Activated CD4-positive, alpha-beta T cell treated with anti-CD3 and anti-CD28 coated beads for 36 hours (primary cell): ENCODE measurements at regions of chr10 and their contacts with region 1.

Region 1: GRCh38 chr10:13160934-13161856 is at the start of gene MCM10:
- DNase-seq: peak; percentile 98
- ATAC-seq: peak; percentile 100
- H3K4me3 Mint-ChIP-seq: peak within 1 kb of the TSS; percentile 91
- H3K27ac Mint-ChIP-seq: peak within 1 kb of the TSS; percentile 86
- H3K4me1 Mint-ChIP-seq: peaks cover 26% of the 10 kb centered on the region
- H3K27me3 Mint-ChIP-seq: no peaks in the 10 kb centered on the region
- total RNA-seq, gene MCM10: 86.0 to 86.2 TPM

Region 2: DNA sequence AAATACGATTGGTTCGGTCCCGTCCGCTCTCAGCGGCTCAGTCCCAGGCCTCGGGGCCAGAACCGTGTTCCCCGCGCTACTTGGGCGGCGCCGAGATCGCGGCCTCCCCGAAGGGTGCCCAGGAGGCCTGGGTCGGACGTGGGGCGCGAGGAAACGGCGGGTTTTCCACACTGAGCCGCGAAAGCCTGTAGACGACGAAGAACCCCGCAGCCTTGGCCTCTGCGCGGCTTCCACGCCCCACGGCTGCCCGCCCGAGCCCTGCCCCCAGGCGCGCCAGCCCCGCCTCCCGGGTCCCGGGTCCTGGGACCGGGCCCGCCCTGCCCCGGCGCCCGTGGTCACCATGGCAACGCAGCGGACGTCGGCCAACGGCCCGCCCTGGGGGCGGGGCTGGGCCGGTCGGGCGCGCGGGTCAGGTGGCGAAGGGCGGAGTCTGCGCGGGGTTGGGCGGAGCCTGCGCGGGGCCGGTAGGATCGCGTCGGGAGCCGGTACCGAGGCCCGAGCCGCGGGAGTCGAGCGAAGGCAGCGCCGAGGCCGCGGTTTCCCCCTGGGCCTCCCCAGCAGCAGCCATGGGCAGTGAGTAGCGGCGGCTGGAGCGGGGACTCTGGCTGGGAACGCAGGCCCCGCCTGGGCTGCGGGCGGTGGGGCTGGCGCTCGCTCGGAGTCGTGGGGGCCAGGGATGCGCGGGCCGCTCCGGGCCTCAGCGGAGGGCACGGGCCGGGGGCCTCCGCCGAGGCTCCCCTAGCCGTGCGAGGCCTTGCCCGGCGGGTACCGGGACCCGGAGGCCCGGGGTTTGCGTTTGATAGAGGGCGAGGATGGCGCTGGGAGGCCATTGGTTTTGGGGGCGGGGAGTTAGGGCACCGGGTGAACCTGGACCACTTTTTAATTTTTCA is 1031.7 kb before region 1 on chr10 and contains the start of gene SEC61A2:
- CTCF ChIA-PET with region 1: no interaction called
- POLR2A ChIA-PET with region 1: no interaction called
- intact Hi-C with region 1: loop called in 1 of 2 experiments (anchors 1 kb)
- DNase-seq: peak; percentile 99
- ATAC-seq: peak; percentile 96
- H3K4me3 Mint-ChIP-seq: peak within 1 kb of the TSS; percentile 81
- H3K27ac Mint-ChIP-seq: peak within 1 kb of the TSS; percentile 76
- H3K4me1 Mint-ChIP-seq: peaks cover 19% of the 10 kb centered on the region
- H3K27me3 Mint-ChIP-seq: no peaks in the 10 kb centered on the region
- total RNA-seq, gene SEC61A2: 11.3 to 12.0 TPM

Region 3: DNA sequence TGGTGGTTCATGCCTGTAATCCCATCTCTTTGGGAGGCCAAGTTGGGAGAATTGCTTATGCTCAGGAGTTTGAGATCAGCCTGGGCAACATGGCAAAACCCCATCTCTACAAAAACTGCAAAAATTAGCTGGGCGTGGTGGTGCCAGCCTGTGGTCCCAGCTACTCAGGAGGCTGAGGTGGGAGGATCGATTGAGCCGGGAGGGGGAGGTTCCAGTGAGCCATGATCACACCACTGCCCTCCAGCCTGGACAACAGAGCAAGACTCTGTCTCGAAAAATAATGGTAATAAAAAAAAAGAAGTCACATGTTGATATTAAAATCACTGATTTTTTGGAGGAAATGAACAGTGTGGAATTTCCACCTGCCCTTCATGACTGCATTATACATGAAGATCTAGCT is 122.9 kb after region 1 on chr10:
- CTCF ChIA-PET with region 1: no interaction called
- POLR2A ChIA-PET with region 1: no interaction called
- intact Hi-C with region 1: no loop called
- DNase-seq: no peak
- ATAC-seq: no peak
- H3K4me3 Mint-ChIP-seq: no peak overlapping the region
- H3K27ac Mint-ChIP-seq: no peak overlapping the region
- H3K4me1 Mint-ChIP-seq: peaks cover 6% of the 10 kb centered on the region
- H3K27me3 Mint-ChIP-seq: no peaks in the 10 kb centered on the region

Region 4: GRCh38 chr10:13348216-13349017 is 187.2 kb after region 1 on chr10 and contains the start of gene SEPHS1:
- CTCF ChIA-PET with region 1: no interaction called
- POLR2A ChIA-PET with region 1: no interaction called
- intact Hi-C with region 1: loop called (anchors 1 kb)
- DNase-seq: peak; percentile 93
- ATAC-seq: peak; percentile 77
- H3K4me3 Mint-ChIP-seq: peak within 1 kb of the TSS; percentile 87
- H3K27ac Mint-ChIP-seq: peak within 1 kb of the TSS; percentile 95
- H3K4me1 Mint-ChIP-seq: peaks cover 57% of the 10 kb centered on the region
- H3K27me3 Mint-ChIP-seq: no peaks in the 10 kb centered on the region
- total RNA-seq, gene SEPHS1: 74.5 to 74.7 TPM

Region 5: GRCh38 chr10:13440185-13441061 is 279.2 kb after region 1 on chr10:
- CTCF ChIA-PET with region 1: interaction called, 3 read pairs
- POLR2A ChIA-PET with region 1: no interaction called
- intact Hi-C with region 1: loop called (anchors 1 to 5 kb)
- DNase-seq: peak; percentile 83
- ATAC-seq: peak; percentile 90
- H3K4me3 Mint-ChIP-seq: peak overlapping the region; percentile 29
- H3K27ac Mint-ChIP-seq: no peak overlapping the region
- H3K4me1 Mint-ChIP-seq: peaks cover 17% of the 10 kb centered on the region
- H3K27me3 Mint-ChIP-seq: peaks cover 38% of the 10 kb centered on the region

Region 6: GRCh38 chr10:13586676-13587355 is 425.6 kb after region 1 on chr10 and contains the start of gene PRPF18:
- CTCF ChIA-PET with region 1: no interaction called
- POLR2A ChIA-PET with region 1: no interaction called
- intact Hi-C with region 1: loop called (anchors 1 to 2 kb)
- DNase-seq: peak; percentile 97
- ATAC-seq: peak; percentile 100
- H3K4me3 Mint-ChIP-seq: peak within 1 kb of the TSS; percentile 99
- H3K27ac Mint-ChIP-seq: peak within 1 kb of the TSS; percentile 95
- H3K4me1 Mint-ChIP-seq: peaks cover 29% of the 10 kb centered on the region
- H3K27me3 Mint-ChIP-seq: peaks cover 8% of the 10 kb centered on the region
- total RNA-seq, gene PRPF18: 21.0 to 22.1 TPM